A673 (cell line): ENCODE measurements at regions of chr12 and their contacts with region 1.

Region 1: GRCh38 chr12:120649442-120650232 is 9.2 kb downstream of the CABP1 start:
- DNase-seq: peak; percentile 34
- H3K4me3 ChIP-seq: peak overlapping the region; percentile 44
- H3K27ac ChIP-seq: no peak overlapping the region
- H3K4me1 ChIP-seq: peaks cover 24% of the 10 kb centered on the region
- H3K27me3 ChIP-seq: peaks cover under 1% of the 10 kb centered on the region
- CTCF ChIP-seq: no peak; the same call in 1 of the 2 replicates

Region 2: GRCh38 chr12:120381752-120382419 is 267.8 kb before region 1 on chr12:
- CTCF ChIA-PET with region 1: no interaction called
- POLR2A ChIA-PET with region 1: no interaction called
- intact Hi-C with region 1: no loop called
- DNase-seq: no peak
- H3K4me3 ChIP-seq: no peak overlapping the region
- H3K27ac ChIP-seq: no peak overlapping the region
- H3K4me1 ChIP-seq: no peaks in the 10 kb centered on the region
- H3K27me3 ChIP-seq: no peaks in the 10 kb centered on the region
- CTCF ChIP-seq: no peak

Region 3: GRCh38 chr12:120445911-120446843 is 203.5 kb before region 1 on chr12 and contains the starts of genes GATC and TRIAP1:
- CTCF ChIA-PET with region 1: no interaction called
- POLR2A ChIA-PET with region 1: no interaction called
- intact Hi-C with region 1: no loop called
- DNase-seq: peak; percentile 90
- H3K4me3 ChIP-seq: peak within 1 kb of the TSS; percentile 100
- H3K27ac ChIP-seq: peak within 1 kb of the TSS; percentile 97
- H3K4me1 ChIP-seq: peaks cover 6% of the 10 kb centered on the region
- H3K27me3 ChIP-seq: no peaks in the 10 kb centered on the region
- CTCF ChIP-seq: no peak
- total RNA-seq, gene GATC: 40.2 and 42.4 TPM in 2 replicates
- total RNA-seq, gene TRIAP1: 29.4 and 36.4 TPM in 2 replicates

Region 4: DNA sequence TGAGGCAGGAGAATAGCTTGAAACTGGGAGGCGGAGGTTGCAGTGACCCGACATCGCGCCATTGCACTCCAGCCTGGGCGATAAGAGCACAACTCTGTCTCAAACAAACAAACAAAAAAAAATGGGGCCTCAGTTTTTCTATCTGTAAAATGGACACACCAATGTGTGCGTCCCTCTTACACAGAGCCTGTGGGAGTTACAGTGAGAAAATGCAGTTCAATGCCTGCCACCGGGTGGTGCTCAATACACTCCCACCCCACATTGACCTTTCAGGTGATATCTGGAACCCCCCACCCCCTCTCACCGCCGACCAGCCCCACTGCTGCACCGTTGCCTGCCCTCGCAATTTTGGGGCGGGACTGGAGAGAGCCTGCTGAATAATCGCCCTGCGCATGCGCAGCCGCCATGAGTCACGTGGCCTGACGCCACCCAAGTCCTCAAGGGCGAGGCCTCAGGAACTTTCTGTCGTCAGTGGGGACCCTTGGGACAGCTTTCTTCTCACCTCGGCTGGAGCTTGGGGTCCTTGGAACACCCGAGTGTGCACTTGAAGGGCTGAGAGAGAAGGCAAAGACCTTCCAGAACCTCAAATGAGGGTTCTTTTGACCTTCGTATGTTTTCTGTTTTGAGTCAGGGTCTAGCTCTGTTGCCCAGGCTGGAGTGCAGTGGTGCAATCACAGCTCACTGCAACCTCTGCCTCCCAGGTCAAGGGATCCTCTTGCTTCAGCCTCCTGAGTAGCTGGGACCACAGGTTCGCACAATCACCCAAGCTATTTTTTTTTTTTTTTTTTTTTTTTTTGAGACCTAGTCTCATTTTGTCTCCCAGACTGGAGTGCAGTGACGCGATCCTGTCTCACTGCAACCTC is 23.8 kb before region 1 on chr12:
- CTCF ChIA-PET with region 1: interaction called, 11 read pairs
- POLR2A ChIA-PET with region 1: no interaction called
- intact Hi-C with region 1: no loop called
- DNase-seq: peak; percentile 24
- H3K4me3 ChIP-seq: no peak overlapping the region
- H3K27ac ChIP-seq: no peak overlapping the region
- H3K4me1 ChIP-seq: no peaks in the 10 kb centered on the region
- H3K27me3 ChIP-seq: no peaks in the 10 kb centered on the region
- CTCF ChIP-seq: peak; percentile 50

Region 5: GRCh38 chr12:120710031-120710804 is 60.6 kb after region 1 on chr12 and contains the start of gene UNC119B:
- CTCF ChIA-PET with region 1: no interaction called
- POLR2A ChIA-PET with region 1: no interaction called
- intact Hi-C with region 1: loop called (anchors 2 kb)
- DNase-seq: peak; percentile 80
- H3K4me3 ChIP-seq: peak within 1 kb of the TSS; percentile 93
- H3K27ac ChIP-seq: peak within 1 kb of the TSS; percentile 90
- H3K4me1 ChIP-seq: peaks cover 5% of the 10 kb centered on the region
- H3K27me3 ChIP-seq: no peaks in the 10 kb centered on the region
- CTCF ChIP-seq: no peak
- total RNA-seq, gene UNC119B: 48.0 and 50.4 TPM in 2 replicates

Region 6: GRCh38 chr12:121005346-121005815 is 355.7 kb after region 1 on chr12:
- CTCF ChIA-PET with region 1: no interaction called
- POLR2A ChIA-PET with region 1: no interaction called
- intact Hi-C with region 1: no loop called
- DNase-seq: peak; percentile 73
- H3K4me3 ChIP-seq: no peak overlapping the region
- H3K27ac ChIP-seq: no peak overlapping the region
- H3K4me1 ChIP-seq: no peaks in the 10 kb centered on the region
- H3K27me3 ChIP-seq: no peaks in the 10 kb centered on the region
- CTCF ChIP-seq: peak; percentile 87

Region 7: DNA sequence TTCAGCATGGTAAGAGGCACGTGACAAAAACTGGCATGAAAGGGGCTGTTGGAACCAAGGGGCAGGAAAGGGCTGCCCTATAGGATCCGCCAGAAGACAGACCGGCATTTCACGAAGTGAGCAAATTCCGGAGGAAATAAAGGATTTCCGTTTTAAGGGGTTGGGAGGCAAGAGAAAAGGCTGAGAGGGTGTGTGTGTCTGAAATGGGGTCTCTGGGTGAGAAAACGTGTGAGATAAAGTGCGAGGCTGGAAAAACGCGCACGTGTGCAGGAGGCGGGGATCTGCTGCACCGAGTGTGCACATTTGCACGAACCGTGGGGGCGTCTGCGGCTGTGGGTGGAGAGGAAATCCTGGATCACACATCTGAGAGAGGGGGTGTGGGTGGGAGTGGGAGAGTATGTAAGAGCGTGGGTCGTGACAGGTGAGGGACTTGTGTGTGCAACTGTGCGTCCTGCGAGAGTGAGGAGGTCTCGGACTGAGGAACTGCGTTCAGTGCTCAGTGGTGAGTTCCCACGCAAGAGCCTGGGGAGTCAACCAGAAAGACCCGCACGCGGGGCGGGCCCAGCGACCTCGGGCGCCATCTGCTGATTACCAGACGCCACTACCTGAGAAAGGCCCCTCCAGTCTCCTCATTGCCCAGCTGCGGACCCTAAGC is 446.0 kb after region 1 on chr12:
- CTCF ChIA-PET with region 1: no interaction called
- POLR2A ChIA-PET with region 1: no interaction called
- intact Hi-C with region 1: loop called (anchors 5 kb)
- DNase-seq: peak; percentile 87
- H3K4me3 ChIP-seq: peak overlapping the region; percentile 37
- H3K27ac ChIP-seq: peak overlapping the region; percentile 18
- H3K4me1 ChIP-seq: peaks cover 7% of the 10 kb centered on the region
- H3K27me3 ChIP-seq: no peaks in the 10 kb centered on the region
- CTCF ChIP-seq: peak; percentile 87